ENCODE measurements at regions of chr3 and their contacts with region 1.

Region 1: DNA sequence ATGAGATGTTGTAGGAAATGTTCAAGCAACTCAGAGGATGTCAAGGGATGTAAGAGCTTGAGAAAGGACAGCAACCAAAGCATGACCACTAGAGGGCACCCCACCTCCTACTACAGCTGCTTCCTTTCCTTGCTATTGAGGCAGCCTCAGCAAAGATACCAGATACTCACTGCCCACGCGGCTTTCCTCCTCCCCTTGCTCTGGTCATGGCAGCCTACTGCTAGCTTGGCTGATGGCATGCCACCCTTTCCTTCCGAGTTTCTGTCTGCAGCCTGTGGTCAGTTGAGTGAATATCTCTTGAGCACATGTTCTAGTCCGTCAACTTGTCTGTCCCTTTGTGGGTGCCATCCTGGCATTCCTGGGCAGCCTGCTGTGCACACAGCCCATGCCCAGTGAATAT is 4.4 kb upstream of the CXCR6 start:
- DNase-seq: peak; percentile 91
- H3K4me3 ChIP-seq: no peak overlapping the region
- H3K27ac ChIP-seq: peak overlapping the region in 2 of 4 donors; percentile 36 to 38
- H3K4me1 ChIP-seq: peaks cover 0 to 34% (median 14%) of the 10 kb centered on the region in 4 donors
- H3K27me3 ChIP-seq: no peaks in the 10 kb centered on the region
- CTCF ChIP-seq: peak; percentile 88 to 91 (median 90)
- EP300 ChIP-seq: no peak
- POLR2A ChIP-seq: no peak

Region 2: DNA sequence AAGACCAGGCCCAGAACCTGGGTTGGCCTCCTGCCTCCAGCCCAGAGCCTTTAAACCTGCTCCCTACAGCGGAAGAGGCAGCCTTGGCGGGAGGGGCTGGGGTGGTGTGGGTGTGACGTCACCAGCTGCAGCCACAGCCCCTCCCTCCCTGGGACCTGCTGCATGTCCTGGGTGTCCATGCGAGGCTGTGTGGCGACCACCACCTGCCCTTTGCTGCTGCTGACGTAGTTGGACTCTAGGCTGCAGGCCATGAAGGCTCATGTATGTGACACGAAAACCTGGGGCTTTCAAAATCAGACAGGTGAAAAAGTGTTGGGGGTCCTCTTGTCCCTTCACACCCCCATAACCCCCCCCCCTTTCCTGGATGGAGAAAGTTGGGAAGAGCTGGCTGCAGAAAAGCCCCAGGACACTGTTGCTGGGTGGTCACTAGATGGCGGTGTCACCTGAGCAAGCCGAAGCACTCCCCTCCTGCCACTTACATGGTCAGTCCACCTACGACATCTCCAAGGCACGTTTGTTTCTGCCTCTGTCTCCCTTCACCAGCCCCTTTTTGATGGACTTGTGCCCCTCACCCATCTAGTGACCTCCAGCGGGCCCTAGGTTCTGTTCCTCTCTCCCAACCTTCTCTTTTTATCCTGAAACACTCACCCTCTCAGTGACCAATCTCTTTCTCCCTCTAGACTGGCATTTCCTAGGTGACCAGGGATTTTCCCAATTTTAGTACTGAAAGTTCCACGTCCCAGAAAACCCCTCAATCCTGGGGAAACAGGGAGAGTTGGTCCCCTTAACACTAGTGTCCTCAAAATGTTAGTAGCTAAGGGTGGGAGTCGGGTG is 177.8 kb before region 1 on chr3:
- intact Hi-C with region 1: loop called (anchors 5 kb)
- DNase-seq: peak; percentile 82
- H3K4me3 ChIP-seq: no peak overlapping the region
- H3K27ac ChIP-seq: no peak overlapping the region
- H3K4me1 ChIP-seq: peaks cover 0 to 5% (median 0%) of the 10 kb centered on the region in 4 donors
- H3K27me3 ChIP-seq: no peaks in the 10 kb centered on the region
- CTCF ChIP-seq: peak; percentile 19 to 76 (median 66)
- EP300 ChIP-seq: no peak
- POLR2A ChIP-seq: no peak

Region 3: DNA sequence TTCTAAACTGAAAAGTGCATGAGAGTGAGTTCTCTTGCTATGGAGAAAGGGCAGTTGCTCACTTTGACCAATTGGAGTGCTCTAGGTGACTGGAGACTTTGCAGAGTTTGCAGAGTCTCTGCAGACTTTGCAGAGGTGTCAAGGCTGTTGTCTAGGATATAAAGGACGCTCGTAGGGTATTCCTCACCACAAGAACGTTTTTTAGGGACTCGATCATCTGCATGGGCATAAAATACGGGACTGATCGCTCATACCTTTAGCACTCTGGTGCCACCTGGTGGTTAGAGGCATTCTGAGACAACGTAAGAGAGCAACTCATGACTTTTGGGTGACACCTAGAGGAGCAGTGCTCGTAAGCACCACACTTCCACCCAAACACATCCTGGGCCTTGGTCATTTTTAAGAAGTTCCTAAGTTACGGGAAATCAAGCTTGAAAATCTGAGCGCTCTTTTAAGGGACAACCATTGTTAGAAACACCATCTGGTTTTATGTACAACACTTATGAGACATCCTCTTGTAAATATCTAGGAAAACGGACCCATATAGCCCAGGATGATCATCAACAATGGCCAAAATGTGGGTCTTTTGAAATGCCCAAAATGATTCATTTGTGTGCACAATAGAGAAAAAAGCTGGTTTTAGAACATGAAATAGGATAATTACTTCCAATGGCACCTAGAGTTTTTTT is 140.0 kb after region 1 on chr3:
- intact Hi-C with region 1: loop called (anchors 1 kb)
- DNase-seq: peak; percentile 95
- H3K4me3 ChIP-seq: peak overlapping the region in 1 of 4 donors; percentile 26
- H3K27ac ChIP-seq: no peak overlapping the region
- H3K4me1 ChIP-seq: peaks cover 0 to 5% (median 0%) of the 10 kb centered on the region in 4 donors
- H3K27me3 ChIP-seq: no peaks in the 10 kb centered on the region
- CTCF ChIP-seq: peak; percentile 94 to 99 (median 99)
- EP300 ChIP-seq: no peak
- POLR2A ChIP-seq: no peak

Region 4: DNA sequence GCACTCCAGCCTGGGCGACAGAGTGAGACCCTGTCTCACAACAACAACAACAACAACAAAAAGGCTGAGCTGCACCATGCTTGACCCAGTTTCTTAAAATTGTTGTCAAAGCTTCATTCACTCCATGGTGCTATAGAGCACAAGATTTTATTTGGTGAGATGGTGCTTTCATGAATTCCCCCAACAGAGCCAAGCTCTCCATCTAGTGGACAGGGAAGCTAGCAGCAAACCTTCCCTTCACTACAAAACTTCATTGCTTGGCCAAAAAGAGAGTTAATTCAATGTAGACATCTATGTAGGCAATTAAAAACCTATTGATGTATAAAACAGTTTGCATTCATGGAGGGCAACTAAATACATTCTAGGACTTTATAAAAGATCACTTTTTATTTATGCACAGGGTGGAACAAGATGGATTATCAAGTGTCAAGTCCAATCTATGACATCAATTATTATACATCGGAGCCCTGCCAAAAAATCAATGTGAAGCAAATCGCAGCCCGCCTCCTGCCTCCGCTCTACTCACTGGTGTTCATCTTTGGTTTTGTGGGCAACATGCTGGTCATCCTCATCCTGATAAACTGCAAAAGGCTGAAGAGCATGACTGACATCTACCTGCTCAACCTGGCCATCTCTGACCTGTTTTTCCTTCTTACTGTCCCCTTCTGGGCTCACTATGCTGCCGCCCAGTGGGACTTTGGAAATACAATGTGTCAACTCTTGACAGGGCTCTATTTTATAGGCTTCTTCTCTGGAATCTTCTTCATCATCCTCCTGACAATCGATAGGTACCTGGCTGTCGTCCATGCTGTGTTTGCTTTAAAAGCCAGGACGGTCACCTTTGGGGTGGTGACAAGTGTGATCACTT is 433.9 kb after region 1 on chr3:
- intact Hi-C with region 1: loop called (anchors 5 kb)
- DNase-seq: no peak
- H3K4me3 ChIP-seq: no peak overlapping the region
- H3K27ac ChIP-seq: no peak overlapping the region
- H3K4me1 ChIP-seq: no peaks in the 10 kb centered on the region
- H3K27me3 ChIP-seq: no peaks in the 10 kb centered on the region
- CTCF ChIP-seq: peak in 1 of 4 experiments; percentile 22
- EP300 ChIP-seq: no peak
- POLR2A ChIP-seq: no peak

Region 5: DNA sequence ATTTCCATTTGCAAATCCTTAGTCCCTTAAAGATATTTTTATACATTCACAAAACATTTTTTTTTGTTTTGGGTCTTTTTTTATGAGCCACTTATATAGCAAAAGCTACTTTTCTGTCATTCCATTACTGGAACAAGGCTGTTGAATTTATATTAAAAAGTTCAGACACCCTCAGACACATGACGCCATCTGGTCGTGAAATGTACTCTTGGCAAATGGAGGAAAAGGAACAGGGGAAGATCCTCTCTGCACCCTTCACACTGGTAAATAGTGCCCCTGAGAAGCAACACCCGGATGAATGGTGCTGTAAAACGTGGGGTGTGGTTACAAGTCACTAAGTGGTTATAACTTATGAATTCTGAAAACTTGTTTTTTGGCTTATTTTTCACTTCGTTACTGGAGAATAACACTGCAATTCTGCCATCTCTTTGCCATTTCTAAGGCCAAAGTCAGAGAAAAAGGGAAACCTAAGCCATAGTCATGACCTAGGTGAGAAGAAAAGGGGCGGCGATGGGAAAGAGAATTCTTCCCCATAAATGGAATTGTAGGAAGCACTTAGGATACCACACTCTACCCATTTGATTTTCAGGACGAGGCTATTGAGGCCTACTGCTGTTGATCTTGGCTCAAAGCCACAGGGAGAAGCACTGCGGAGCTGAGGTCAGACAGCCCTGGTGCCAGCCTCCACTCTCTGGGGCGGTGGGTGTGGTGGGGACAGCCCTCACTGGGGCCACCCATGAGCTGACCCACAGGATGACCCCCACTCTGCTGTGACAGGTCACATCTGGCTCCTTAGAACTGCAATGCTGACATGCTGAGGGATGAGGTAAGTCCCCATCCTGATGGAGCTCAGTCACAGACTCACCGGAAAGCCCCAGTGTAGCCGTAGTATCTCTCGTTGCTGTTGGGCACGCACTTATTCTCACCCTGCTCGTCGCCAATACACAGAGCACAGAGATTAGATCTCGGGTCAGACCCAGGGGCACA is 504.0 kb after region 1 on chr3:
- intact Hi-C with region 1: loop called (anchors 10 kb)
- DNase-seq: no peak
- H3K4me3 ChIP-seq: no peak overlapping the region
- H3K27ac ChIP-seq: no peak overlapping the region
- H3K4me1 ChIP-seq: no peaks in the 10 kb centered on the region
- H3K27me3 ChIP-seq: no peaks in the 10 kb centered on the region
- CTCF ChIP-seq: peak in 2 of 4 experiments; percentile 66 to 72
- EP300 ChIP-seq: no peak
- POLR2A ChIP-seq: no peak

Measured in sigmoid colon (tissue), 7 donors.